GM18951 (cell line): ENCODE measurements at regions of chr2 and their contacts with region 1.

Region 1: DNA sequence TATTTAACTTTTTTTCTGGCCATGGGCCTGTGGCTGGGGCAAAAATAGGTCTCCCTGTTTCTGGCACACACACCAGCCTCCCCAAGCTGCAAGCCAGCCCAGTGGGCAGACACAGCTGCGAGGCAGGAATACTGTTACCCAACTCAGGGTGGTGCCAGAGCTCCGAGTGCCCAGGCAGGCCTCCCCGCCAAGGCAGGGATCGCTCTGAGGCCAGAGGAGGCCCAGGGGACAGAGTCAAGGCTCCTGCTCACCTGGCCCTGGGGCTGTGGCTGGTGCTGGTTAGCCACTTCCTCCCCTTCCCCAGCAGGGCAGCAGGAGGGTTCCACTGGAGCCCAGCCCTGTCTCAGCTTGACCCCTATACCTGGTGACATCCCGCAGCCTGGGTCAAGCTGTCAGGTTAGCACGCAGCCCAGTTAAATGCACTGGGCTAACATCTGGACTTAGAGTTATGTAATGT is 67.1 kb upstream of the EPAS1 start:
- POLR2A ChIP-seq: no peak

Region 2: GRCh38 chr2:46632349-46632748 is 402.2 kb after region 1 on chr2:
- in situ Hi-C with region 1: loop called (anchors 25 kb)
- POLR2A ChIP-seq: no peak

Region 3: DNA sequence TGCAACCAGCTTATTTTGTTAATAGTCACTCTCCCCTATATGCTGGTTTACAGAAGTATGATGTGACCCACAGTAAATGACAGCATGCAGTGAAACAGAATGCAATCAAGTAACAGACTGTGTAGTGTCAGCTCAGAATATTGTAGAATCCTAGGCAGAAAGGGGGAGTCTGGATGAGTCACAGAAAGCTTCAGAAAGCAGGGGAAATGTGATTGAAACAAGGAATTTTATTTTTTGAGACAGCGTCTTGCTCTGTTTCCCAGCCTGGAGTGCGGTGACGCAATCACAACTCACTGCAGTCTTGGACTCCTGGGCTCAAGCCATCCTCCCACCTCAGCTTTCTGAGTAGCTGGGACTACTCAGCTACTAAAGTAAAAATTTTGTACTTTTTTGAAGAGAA is 1896.0 kb after region 1 on chr2:
- in situ Hi-C with region 1: no loop called
- POLR2A ChIP-seq: no peak